ENCODE measurements at regions of chr16 and their contacts with region 1.

Region 1: GRCh38 chr16:3074860-3075522 is 9.6 kb downstream of the IL32 start:
- DNase-seq: peak; percentile 83
- ATAC-seq: peak; percentile 73
- H3K4me3 Mint-ChIP-seq: peak overlapping the region; percentile 83
- H3K27ac Mint-ChIP-seq: peak overlapping the region; percentile 98
- H3K4me1 Mint-ChIP-seq: peaks cover 73% of the 10 kb centered on the region
- H3K27me3 Mint-ChIP-seq: no peaks in the 10 kb centered on the region

Region 2: GRCh38 chr16:2710711-2711231 is 364.2 kb before region 1 on chr16:
- POLR2A ChIA-PET with region 1: no interaction called
- DNase-seq: no peak
- ATAC-seq: no peak
- H3K4me3 Mint-ChIP-seq: no peak overlapping the region
- H3K27ac Mint-ChIP-seq: no peak overlapping the region
- H3K4me1 Mint-ChIP-seq: peaks cover 4% of the 10 kb centered on the region
- H3K27me3 Mint-ChIP-seq: no peaks in the 10 kb centered on the region

Region 3: DNA sequence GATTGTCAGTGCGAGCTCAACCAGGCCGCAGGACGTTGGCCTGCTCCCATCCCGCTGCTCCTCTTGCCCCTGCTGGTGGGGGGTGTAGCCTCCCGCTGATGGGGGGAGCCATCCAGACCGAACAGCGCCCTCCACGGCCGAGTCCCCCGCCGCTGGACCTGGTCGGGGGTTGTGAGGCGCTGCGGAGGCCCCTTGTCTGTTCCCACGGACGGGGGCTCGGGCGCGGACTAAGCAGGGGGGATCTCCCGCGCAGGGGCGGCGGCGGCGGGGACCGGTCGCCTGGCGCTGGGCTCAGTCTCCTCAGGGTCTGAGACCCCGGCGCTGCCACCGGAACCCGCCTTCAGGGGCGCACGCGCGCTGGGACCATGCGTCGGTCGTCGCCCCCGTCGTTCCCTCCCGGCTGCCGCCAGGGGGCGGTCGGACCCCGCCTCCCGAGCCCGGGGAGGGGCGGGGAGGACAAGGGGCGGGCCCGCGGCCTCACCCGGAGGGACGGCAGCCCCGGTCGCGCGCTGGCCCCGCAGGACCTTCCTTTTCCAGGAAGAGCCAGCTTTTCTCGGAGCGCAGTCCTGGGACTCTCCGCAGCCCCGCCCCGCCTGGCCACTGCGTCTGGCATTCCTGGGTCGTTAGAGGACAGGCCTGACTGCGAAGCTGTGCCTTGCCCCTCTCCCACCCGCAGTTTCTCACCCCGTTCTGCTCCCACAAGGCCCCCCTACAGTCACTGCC is 15.8 kb before region 1 on chr16:
- POLR2A ChIA-PET with region 1: interaction called, 143 read pairs
- DNase-seq: peak; percentile 99
- ATAC-seq: peak; percentile 69
- H3K4me3 Mint-ChIP-seq: peak overlapping the region; percentile 93
- H3K27ac Mint-ChIP-seq: peak overlapping the region; percentile 91
- H3K4me1 Mint-ChIP-seq: peaks cover 57% of the 10 kb centered on the region
- H3K27me3 Mint-ChIP-seq: no peaks in the 10 kb centered on the region

Region 4: DNA sequence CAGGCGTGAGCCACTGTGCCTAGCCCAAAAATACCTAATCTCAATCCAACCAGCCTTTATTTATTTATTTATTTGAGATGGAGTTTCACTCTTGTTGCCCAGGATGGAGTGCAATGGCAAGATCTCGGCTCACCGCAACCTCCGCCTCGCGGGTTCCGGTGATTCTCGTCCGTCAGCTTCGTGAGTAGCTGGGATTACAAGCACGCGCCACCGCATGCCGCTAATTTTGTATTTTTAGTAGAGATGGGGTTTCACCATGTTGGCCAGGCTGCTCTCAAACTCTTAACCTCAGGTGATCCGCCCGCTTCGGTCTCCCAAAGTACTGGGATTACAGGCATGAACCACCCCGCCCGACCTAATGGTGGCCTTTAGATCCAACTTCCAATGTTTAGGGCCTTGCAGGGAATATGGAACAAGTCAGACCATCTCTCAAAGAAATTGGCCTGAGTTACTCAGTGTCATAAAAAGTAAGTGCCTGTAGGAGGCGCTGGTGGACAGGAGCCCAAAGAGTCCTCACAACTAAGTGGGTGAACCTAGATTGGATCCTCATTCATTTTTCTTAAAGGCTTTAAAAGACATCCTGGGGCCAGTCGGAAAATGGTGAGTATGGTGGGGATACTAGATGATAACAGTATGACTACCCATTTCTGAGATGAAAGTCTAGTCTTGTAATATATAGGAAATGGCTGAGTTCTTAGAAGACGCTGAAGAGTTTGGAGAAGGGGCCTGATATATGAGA is 19.5 kb after region 1 on chr16:
- POLR2A ChIA-PET with region 1: interaction called, 42 read pairs
- DNase-seq: no peak
- ATAC-seq: peak; percentile 37
- H3K4me3 Mint-ChIP-seq: peak overlapping the region; percentile 8
- H3K27ac Mint-ChIP-seq: peak overlapping the region; percentile 54
- H3K4me1 Mint-ChIP-seq: peaks cover 23% of the 10 kb centered on the region
- H3K27me3 Mint-ChIP-seq: peaks cover 2% of the 10 kb centered on the region

Region 5: DNA sequence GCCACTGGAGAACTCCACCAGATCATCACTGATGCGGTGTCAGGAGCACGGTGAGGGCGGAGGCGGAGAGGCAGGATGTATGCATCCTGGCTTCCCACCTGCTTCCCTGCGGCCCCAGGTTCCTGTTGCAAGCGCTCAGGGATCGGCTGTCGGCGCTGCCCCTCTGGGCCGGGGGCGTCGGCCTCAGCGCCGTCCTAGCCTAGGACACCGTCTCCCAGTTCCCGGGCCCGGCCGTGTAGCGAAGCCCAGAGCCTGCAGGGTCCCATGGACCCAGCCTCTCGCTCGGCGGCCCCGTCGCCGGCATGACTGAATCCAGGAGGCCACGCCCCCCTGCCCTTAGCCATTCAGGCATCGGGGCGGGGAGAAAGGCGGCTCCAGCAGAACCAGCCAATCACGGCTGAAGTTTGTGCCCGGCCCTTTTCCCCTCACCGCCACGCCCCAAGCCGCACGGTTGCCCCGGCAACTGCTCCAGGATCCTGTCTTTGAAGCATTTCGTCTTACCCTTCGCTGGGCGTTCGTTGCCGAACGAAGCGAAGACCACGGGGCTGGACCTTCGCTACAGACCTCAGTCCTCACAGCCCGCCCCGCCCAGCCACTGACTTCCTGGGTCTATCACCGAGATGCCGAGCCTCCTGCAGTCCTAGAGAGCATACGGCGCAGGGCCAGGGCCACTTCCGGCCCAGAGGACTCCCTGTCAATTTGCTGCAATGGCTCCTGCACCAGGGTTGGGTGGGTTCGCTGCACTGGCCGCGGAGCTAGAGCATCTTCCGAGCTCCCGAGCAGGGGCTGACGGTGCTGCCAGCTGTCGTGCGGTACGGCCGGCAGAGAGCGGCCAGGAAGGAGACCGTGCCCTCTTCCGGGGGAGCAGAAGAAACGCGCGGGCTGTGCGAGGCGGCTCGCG is 49.2 kb after region 1 on chr16:
- POLR2A ChIA-PET with region 1: interaction called, 43 read pairs
- DNase-seq: peak; percentile 98
- ATAC-seq: peak; percentile 86
- H3K4me3 Mint-ChIP-seq: peak overlapping the region; percentile 97
- H3K27ac Mint-ChIP-seq: peak overlapping the region; percentile 98
- H3K4me1 Mint-ChIP-seq: peaks cover 28% of the 10 kb centered on the region
- H3K27me3 Mint-ChIP-seq: no peaks in the 10 kb centered on the region

Region 6: GRCh38 chr16:3134564-3135417 is 59.8 kb after region 1 on chr16 and contains the start of gene ZNF213:
- POLR2A ChIA-PET with region 1: interaction called, 43 read pairs
- DNase-seq: peak; percentile 87
- ATAC-seq: peak; percentile 95
- H3K4me3 Mint-ChIP-seq: peak within 1 kb of the TSS; percentile 99
- H3K27ac Mint-ChIP-seq: peak within 1 kb of the TSS; percentile 95
- H3K4me1 Mint-ChIP-seq: peaks cover 23% of the 10 kb centered on the region
- H3K27me3 Mint-ChIP-seq: no peaks in the 10 kb centered on the region
- total RNA-seq, gene ZNF213: 12.9 to 13.3 TPM